GM12878 (cell line): ENCODE measurements at regions of chr12 and their contacts with region 1.

Region 1: GRCh38 chr12:93243689-93244513 is 133.8 kb upstream of the NUDT4 start:
- DNase-seq: peak; percentile 75
- ATAC-seq: peak; percentile 52
- H3K4me3 ChIP-seq: peak overlapping the region; percentile 47
- H3K27ac ChIP-seq: peak overlapping the region; percentile 87
- H3K4me1 ChIP-seq: peaks cover 62% of the 10 kb centered on the region
- H3K27me3 ChIP-seq: no peaks in the 10 kb centered on the region
- CTCF ChIP-seq: no peak
- EP300 ChIP-seq: no peak
- POLR2A ChIP-seq: no peak
- RAD21 ChIP-seq: 0 out of 2 replicates have a peak, but pooled peaks have one; percentile 1

Region 2: GRCh38 chr12:93025145-93025805 is 218.6 kb before region 1 on chr12:
- CTCF ChIA-PET with region 1: interaction called, 3 read pairs
- POLR2A ChIA-PET with region 1: no interaction called
- RAD21 ChIA-PET with region 1: no interaction called
- SMC1A ChIA-PET with region 1: interaction called, 7 read pairs
- in situ Hi-C with region 1: no loop called
- intact Hi-C with region 1: loop called (anchors 10 kb)
- DNase-seq: peak; percentile 63
- ATAC-seq: peak; percentile 99
- H3K4me3 ChIP-seq: no peak overlapping the region
- H3K27ac ChIP-seq: no peak overlapping the region
- H3K4me1 ChIP-seq: no peaks in the 10 kb centered on the region
- H3K27me3 ChIP-seq: no peaks in the 10 kb centered on the region
- CTCF ChIP-seq: peak; percentile 61 to 70 (median 69); a peak in 5 of 6 replicates
- EP300 ChIP-seq: no peak
- POLR2A ChIP-seq: no peak
- RAD21 ChIP-seq: peak; percentile 91

Region 3: DNA sequence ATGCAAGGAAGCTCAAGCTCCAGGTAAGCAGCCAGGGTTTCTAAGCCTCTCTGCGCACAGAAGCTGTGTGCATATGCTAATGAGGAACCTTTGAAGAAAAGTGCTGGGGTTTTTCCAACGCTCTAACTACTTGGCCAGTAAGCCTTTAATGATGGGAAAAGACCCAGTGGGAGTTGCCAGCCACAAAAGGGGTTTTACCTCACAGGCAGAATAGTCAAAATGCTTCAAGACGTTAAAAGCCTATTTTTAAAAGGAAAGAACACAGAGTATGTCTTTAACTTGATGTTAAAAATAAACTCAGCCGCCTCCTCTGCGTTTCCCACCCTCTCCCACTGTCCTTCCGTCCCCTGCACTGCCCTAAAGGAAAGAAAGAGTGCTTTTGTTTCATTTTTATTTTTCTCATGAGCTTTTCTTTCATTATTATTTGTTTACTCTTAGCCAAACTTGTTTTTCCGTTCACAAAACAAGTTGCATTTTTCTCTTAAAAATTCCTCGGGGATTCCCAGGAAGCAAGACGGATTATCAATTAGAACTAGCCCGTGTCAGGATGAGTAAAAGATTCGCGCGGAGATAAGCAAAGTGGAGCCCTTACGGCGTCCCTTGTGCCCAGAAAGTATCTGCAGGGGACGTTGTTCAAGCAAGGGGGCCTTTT is 75.9 kb before region 1 on chr12:
- CTCF ChIA-PET with region 1: interaction called, 21 read pairs
- POLR2A ChIA-PET with region 1: interaction called, 37 read pairs
- RAD21 ChIA-PET with region 1: interaction called, 74 read pairs
- SMC1A ChIA-PET with region 1: interaction called, 65 read pairs
- in situ Hi-C with region 1: no loop called
- intact Hi-C with region 1: loop called (anchors 1 kb)
- DNase-seq: peak; percentile 95
- ATAC-seq: peak; percentile 84
- H3K4me3 ChIP-seq: peak overlapping the region; percentile 69
- H3K27ac ChIP-seq: peak overlapping the region; percentile 88
- H3K4me1 ChIP-seq: peaks cover 32% of the 10 kb centered on the region
- H3K27me3 ChIP-seq: no peaks in the 10 kb centered on the region
- CTCF ChIP-seq: no peak
- EP300 ChIP-seq: peak; percentile 78 to 87; a peak in 3 of 4 replicates
- POLR2A ChIP-seq: no peak
- RAD21 ChIP-seq: peak; percentile 23; the same call in 1 of the 2 replicates

Region 4: GRCh38 chr12:93214523-93215289 is 29.2 kb before region 1 on chr12:
- CTCF ChIA-PET with region 1: interaction called, 5 read pairs
- POLR2A ChIA-PET with region 1: interaction called, 6 read pairs
- RAD21 ChIA-PET with region 1: interaction called, 5 read pairs
- SMC1A ChIA-PET with region 1: interaction called, 18 read pairs
- in situ Hi-C with region 1: no loop called
- intact Hi-C with region 1: no loop called
- DNase-seq: no peak
- ATAC-seq: no peak
- H3K4me3 ChIP-seq: no peak overlapping the region
- H3K27ac ChIP-seq: no peak overlapping the region
- H3K4me1 ChIP-seq: 0 out of 2 replicates have a peak, but pooled peaks cover 3% of the 10 kb centered on the region
- H3K27me3 ChIP-seq: no peaks in the 10 kb centered on the region
- CTCF ChIP-seq: no peak
- EP300 ChIP-seq: no peak
- POLR2A ChIP-seq: no peak
- RAD21 ChIP-seq: no peak

Region 5: GRCh38 chr12:93358058-93358457 is 114.2 kb after region 1 on chr12:
- CTCF ChIA-PET with region 1: no interaction called
- POLR2A ChIA-PET with region 1: no interaction called
- RAD21 ChIA-PET with region 1: interaction called, 11 read pairs
- SMC1A ChIA-PET with region 1: interaction called, 17 read pairs
- in situ Hi-C with region 1: no loop called
- intact Hi-C with region 1: no loop called
- DNase-seq: no peak
- ATAC-seq: peak; percentile 97
- H3K4me3 ChIP-seq: no peak overlapping the region
- H3K27ac ChIP-seq: peak overlapping the region; percentile 37
- H3K4me1 ChIP-seq: peaks cover 12% of the 10 kb centered on the region
- H3K27me3 ChIP-seq: no peaks in the 10 kb centered on the region
- CTCF ChIP-seq: no peak
- EP300 ChIP-seq: no peak
- POLR2A ChIP-seq: no peak
- RAD21 ChIP-seq: no peak

Region 6: DNA sequence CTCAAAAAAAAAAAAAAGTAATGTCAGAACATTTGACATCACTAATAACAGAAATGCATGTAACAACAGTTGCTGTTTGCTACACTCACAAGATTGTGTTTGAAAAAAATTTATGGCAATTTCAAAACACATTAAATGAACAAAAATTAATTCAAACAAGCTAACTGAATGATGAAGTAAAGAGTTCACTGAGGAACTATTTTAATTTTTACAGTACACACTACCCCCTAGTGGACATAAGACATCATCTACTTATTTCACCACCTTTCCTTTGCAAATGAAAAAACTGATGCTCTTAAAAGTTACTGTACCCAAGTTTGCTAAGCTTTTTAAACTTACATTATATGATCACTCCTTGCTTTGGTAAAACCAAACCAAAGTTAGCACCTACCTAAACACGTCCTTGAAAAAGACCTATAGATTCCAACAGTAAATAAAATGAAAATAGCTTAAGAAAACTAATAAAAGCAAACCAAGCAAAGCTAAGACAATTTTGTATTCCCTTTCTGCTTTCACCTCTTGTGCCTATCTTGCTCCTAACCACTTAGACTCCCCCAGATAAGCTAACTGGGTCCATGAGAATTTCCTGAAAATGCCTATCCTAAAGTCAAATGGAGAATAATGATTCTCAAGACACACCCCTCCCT is 175.6 kb after region 1 on chr12:
- CTCF ChIA-PET with region 1: interaction called, 7 read pairs
- POLR2A ChIA-PET with region 1: interaction called, 3 read pairs
- RAD21 ChIA-PET with region 1: interaction called, 11 read pairs
- SMC1A ChIA-PET with region 1: interaction called, 6 read pairs
- in situ Hi-C with region 1: no loop called
- intact Hi-C with region 1: no loop called
- DNase-seq: no peak
- ATAC-seq: peak; percentile 54
- H3K4me3 ChIP-seq: no peak overlapping the region
- H3K27ac ChIP-seq: no peak overlapping the region
- H3K4me1 ChIP-seq: peaks cover 83% of the 10 kb centered on the region
- H3K27me3 ChIP-seq: no peaks in the 10 kb centered on the region
- CTCF ChIP-seq: peak; percentile 48 to 58 (median 54); a peak in 5 of 6 replicates
- EP300 ChIP-seq: no peak
- POLR2A ChIP-seq: no peak
- RAD21 ChIP-seq: peak; percentile 46; the same call in 1 of the 2 replicates